Ascending aorta (tissue), 2 donors: ENCODE measurements at regions of chr20 and their contacts with region 1.

Region 1: GRCh38 chr20:23050847-23051631 is 1.6 kb upstream of the THBD start:
- DNase-seq: peak; percentile 49 to 95
- H3K4me3 ChIP-seq: peak overlapping the region; percentile 67 to 78
- H3K27ac ChIP-seq: peak overlapping the region; percentile 91 to 93
- H3K4me1 ChIP-seq: peaks cover 9 to 20% of the 10 kb centered on the region in 2 donors
- H3K27me3 ChIP-seq: no peaks in the 10 kb centered on the region
- CTCF ChIP-seq: peak; percentile 76 to 86 (median 85)

Region 2: DNA sequence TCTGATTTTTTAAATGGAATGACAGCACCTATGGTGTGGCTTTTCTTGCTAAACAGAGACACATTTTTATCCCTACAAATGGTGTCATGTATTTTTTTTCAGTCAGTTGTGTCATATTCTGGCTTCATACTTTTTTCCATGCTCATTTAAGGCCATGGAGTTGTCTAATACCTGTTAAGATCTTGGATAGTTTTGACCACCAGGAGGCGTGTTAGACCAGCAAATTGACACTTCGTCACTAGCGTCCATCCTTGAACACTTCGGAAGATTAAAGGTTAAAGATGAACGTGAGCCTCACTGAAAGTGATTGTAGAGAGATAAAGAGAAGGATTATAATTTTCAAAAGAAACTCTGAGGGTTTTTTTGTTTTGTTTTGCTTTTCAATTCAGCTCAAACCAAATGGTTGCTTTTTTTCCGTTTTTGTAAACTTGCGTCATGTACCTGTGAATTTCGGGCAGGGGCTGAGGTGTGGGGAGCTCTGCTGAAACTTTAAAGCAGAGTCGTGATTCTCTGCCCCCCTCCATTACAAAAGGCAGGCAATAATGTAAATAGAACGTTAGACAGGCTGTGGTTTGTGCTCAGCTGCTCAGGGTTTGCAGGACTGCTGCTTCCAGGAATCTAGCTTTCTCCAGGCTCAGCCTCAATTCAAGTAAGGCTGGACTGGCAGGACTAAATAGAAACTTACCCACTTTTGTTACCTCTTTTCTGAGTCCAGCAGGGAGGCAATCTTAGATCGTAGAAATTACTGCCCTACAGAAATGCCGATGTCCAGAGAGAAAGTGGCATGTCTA is 711.8 kb before region 1 on chr20:
- intact Hi-C with region 1: loop called (anchors 2 kb)
- DNase-seq: peak in 1 of 2 donors; percentile 72
- H3K4me3 ChIP-seq: peak overlapping the region in 1 of 2 donors; percentile 47
- H3K27ac ChIP-seq: peak overlapping the region in 1 of 2 donors; percentile 11
- H3K4me1 ChIP-seq: peaks cover 0 to 9% of the 10 kb centered on the region in 2 donors
- H3K27me3 ChIP-seq: no peaks in the 10 kb centered on the region
- CTCF ChIP-seq: peak; percentile 66 to 75 (median 68)

Region 3: DNA sequence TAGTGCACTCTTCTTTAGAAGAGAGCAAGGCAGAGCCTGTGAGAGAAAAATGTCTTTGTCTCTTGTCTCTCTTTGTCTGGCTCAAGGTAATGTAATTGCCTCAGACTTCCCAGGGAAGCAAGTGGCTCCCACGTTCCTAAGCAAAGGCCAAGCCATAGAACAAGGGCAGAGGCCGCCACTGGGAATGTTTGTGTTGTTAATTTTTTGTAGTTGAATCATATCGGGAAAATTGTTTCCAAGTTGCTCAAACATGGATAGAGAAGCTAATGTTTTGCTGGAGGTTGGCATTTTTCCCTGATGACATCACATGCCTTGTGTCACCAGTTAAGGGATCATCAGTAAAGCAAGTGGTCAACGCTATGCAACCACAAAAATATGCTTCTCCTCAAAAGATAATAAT is 255.2 kb before region 1 on chr20:
- intact Hi-C with region 1: loop called (anchors 5 kb)
- DNase-seq: peak in 1 of 2 donors; percentile 87
- H3K4me3 ChIP-seq: no peak overlapping the region
- H3K27ac ChIP-seq: peak overlapping the region; percentile 52 to 78
- H3K4me1 ChIP-seq: peaks cover 4 to 27% of the 10 kb centered on the region in 2 donors
- H3K27me3 ChIP-seq: no peaks in the 10 kb centered on the region
- CTCF ChIP-seq: no peak

Region 4: DNA sequence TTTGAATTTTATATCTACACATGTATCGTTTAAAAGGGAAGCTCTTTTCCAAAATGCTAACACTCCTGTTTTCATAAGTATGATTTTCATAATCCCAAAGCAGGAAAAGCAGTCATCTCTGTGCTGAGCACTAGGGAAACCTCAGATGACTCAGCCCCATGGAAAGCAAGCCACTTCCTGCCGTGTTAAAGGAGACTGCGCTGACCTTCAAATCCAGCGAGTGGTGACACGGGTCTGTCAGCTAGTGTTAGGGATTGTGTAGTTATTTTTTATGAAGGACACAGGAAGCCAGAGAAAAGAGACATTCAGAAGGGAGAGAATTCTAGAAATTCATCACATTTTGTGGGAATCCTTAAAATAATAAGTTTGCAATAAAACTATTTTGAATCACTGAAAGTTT is 92.1 kb after region 1 on chr20:
- intact Hi-C with region 1: loop called (anchors 2 kb)
- DNase-seq: peak; percentile 68 to 92
- H3K4me3 ChIP-seq: no peak overlapping the region
- H3K27ac ChIP-seq: peak overlapping the region; percentile 93 to 96
- H3K4me1 ChIP-seq: peaks cover 11 to 51% of the 10 kb centered on the region in 2 donors
- H3K27me3 ChIP-seq: no peaks in the 10 kb centered on the region
- CTCF ChIP-seq: no peak

Region 5: DNA sequence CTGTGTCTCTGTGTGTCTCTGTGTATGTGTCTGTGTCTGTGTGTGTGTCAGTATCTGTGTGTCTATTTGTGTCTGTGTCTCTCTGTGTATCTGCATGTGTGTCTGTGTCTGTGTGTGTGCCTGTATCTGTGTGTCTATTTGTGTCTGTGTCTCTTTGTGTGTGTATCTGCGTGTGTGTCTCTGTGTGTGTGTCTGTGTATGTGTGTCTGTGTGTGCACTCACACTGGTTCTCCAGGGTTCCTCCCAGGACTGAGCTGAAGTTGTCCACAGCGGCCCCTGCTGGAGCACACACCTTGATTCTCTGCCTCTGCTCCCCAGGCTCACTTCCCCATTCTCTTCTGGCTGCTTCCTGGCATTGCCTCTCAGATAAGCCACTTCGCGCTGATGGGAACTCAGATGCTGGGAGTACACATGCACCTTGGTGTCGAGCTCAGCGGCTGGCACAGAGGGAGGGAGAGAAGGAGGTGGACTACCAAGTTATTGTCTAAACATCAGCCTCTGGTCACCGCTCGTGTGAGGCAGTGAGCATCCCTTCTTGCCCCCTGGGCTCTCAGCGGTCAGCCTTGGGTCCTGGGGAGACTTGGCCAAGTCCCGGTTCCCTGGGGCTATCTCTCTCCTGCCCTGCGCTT is 194.6 kb after region 1 on chr20:
- intact Hi-C with region 1: loop called (anchors 2 kb)
- DNase-seq: peak in 1 of 2 donors; percentile 76
- H3K4me3 ChIP-seq: no peak overlapping the region
- H3K27ac ChIP-seq: peak overlapping the region in 1 of 2 donors; percentile 37
- H3K4me1 ChIP-seq: peaks cover 0 to 5% of the 10 kb centered on the region in 2 donors
- H3K27me3 ChIP-seq: no peaks in the 10 kb centered on the region
- CTCF ChIP-seq: peak in 2 of 3 experiments; percentile 19 to 41

Region 6: GRCh38 chr20:23350196-23350903 is 299.3 kb after region 1 on chr20 and contains the start of gene NXT1:
- intact Hi-C with region 1: loop called (anchors 2 kb)
- DNase-seq: peak; percentile 93 to 99
- H3K4me3 ChIP-seq: peak within 1 kb of the TSS; percentile 93 to 97
- H3K27ac ChIP-seq: peak within 1 kb of the TSS; percentile 99 to 100
- H3K4me1 ChIP-seq: peaks cover 3 to 18% of the 10 kb centered on the region in 2 donors
- H3K27me3 ChIP-seq: no peaks in the 10 kb centered on the region
- CTCF ChIP-seq: peak in 1 of 3 experiments; percentile 0
- total RNA-seq, gene NXT1: 50.0 TPM